ENCODE measurements at regions of chr12 and their contacts with region 1.

Region 1: GRCh38 chr12:122336015-122336946 is 70.0 kb upstream of the VPS33A start:
- DNase-seq: peak; percentile 10
- ATAC-seq: peak; percentile 72
- H3K4me3 ChIP-seq: no peak overlapping the region
- H3K27ac ChIP-seq: no peak overlapping the region
- H3K4me1 ChIP-seq: no peaks in the 10 kb centered on the region
- H3K27me3 ChIP-seq: no peaks in the 10 kb centered on the region
- CTCF ChIP-seq: peak; percentile 62 to 84 (median 84)
- POLR2A ChIP-seq: no peak
- RAD21 ChIP-seq: peak; percentile 78

Region 2: DNA sequence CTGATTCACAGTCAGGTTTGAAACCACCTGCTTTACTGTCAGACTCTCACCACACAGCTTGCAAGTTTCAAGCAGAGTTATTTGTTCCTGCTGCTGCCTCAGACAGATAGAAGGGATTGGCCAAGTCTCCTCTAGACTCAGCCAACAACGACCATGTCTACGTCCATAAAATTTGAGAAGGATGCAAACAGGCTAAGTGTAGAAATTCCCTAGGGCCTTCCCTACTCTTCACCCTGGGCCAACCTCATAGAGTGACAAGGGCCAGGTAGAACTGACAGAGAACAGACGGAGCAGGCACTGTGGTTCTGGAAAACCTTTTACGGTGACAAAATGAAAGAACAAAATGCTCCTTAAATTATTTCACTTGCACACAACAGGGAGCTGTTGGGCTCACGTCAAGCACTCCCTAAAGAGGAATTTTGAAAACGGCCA is 46.7 kb after region 1 on chr12:
- CTCF ChIA-PET with region 1: no interaction called
- POLR2A ChIA-PET with region 1: no interaction called
- RAD21 ChIA-PET with region 1: no interaction called
- intact Hi-C with region 1: no loop called
- DNase-seq: no peak
- ATAC-seq: no peak
- H3K4me3 ChIP-seq: no peak overlapping the region
- H3K27ac ChIP-seq: no peak overlapping the region
- H3K4me1 ChIP-seq: no peaks in the 10 kb centered on the region
- H3K27me3 ChIP-seq: no peaks in the 10 kb centered on the region
- CTCF ChIP-seq: no peak
- POLR2A ChIP-seq: no peak
- RAD21 ChIP-seq: no peak

Region 3: DNA sequence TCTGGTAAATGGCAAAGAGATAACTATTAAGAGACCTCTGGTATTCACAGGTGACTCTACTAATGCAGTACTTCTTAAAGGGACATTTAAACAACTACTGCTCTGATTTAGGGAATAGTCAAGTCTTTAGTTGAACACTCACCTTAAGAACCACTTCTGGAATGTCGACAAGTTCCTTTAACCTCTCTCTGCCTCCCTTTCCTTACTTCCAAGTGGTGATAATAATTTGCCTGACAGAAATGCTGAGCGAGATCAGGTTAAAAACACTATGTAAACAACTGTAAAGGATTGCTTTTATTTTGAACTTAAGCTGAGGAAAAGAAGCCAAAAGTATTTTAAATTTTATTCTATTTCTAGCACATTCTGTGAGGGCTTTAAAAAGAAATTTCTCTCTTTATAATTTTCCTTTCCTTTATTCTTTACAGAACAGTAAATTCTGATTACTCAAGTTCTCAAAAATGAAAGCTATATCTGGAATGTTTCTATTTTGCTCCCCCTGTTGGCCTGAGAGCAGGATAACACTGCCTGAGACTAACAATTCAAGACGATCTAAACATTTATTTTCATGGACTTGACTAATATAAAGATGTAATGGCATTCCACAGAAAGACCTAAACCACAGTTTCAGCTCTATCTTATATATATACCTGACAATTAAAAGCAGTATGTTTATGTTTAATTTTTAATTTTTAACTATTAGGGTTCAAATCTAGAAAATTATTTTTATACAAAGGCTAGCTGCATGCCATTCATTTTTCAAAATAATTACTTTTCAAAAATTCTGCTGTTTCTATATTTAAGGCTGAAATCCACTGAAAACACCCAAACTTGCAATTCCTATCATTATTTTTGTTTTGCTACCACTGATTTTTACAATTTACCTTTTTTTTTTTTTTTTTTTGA is 135.3 kb after region 1 on chr12:
- CTCF ChIA-PET with region 1: interaction called, 5 read pairs
- POLR2A ChIA-PET with region 1: no interaction called
- RAD21 ChIA-PET with region 1: interaction called in 1 of 2 experiments, 3 read pairs
- intact Hi-C with region 1: loop called (anchors 5 kb)
- DNase-seq: peak; percentile 42
- ATAC-seq: peak; percentile 67; the same call in 1 of the 2 replicates
- H3K4me3 ChIP-seq: no peak overlapping the region
- H3K27ac ChIP-seq: no peak overlapping the region
- H3K4me1 ChIP-seq: peaks cover 0 to 10% of the 10 kb centered on the region in 2 experiments; a peak in 2 of 4 replicates
- H3K27me3 ChIP-seq: no peaks in the 10 kb centered on the region
- CTCF ChIP-seq: peak; percentile 67 to 78 (median 77)
- POLR2A ChIP-seq: no peak
- RAD21 ChIP-seq: peak; percentile 81

Region 4: DNA sequence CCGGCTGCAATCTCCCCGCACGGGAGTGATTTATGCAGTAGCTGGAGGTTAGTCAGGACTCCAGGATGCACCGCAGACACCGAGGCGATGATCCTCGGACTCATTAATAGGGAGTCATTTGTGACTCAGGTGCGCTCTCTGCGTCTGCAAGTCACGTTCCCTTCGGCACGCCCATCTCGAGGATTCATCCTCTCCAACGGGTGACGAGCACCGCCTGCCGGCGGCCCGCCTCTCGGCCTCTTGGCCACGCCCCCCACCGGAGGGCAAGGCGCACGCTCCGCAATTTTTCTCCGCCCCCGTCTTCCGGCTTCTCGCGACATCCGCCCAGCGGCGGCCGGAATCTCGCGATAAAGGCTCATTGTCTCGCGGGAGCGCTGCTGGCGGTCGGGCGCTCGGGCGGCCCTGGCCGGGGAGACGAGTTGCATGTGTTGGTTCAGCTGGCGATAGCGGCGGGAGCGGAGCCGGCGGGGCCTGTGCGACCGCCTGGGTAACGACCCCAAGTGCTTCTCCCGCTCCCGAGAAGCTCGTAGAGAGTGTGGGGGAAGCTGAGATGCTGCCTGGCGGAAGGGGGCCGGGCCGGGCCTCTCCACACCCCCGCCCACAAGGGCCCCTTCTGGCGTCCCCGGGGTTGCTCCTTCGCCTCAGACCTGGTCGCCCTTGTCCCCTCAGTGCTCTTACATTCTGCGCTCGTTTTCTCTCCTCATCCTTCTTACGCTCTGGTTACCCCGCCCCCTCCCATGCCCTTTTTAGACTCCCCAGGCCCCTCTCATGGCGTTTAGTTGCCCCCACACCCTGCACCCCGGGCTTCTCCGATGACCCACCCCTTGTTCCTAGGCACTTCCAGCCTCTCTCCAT is 416.4 kb after region 1 on chr12 and contains the start of gene DENR:
- CTCF ChIA-PET with region 1: no interaction called
- POLR2A ChIA-PET with region 1: no interaction called
- RAD21 ChIA-PET with region 1: no interaction called
- intact Hi-C with region 1: loop called (anchors 2 kb)
- DNase-seq: peak; percentile 96
- ATAC-seq: peak; percentile 89
- H3K4me3 ChIP-seq: peak within 1 kb of the TSS; percentile 90 to 99
- H3K27ac ChIP-seq: peak within 1 kb of the TSS; percentile 77
- H3K4me1 ChIP-seq: peaks cover 5 to 14% of the 10 kb centered on the region in 2 experiments; a peak in 3 of 4 replicates
- H3K27me3 ChIP-seq: no peaks in the 10 kb centered on the region
- CTCF ChIP-seq: peak; percentile 48 to 91 (median 70)
- POLR2A ChIP-seq: peak; percentile 85
- RAD21 ChIP-seq: peak; percentile 99
- total RNA-seq, gene DENR: 59.1 TPM

Region 5: DNA sequence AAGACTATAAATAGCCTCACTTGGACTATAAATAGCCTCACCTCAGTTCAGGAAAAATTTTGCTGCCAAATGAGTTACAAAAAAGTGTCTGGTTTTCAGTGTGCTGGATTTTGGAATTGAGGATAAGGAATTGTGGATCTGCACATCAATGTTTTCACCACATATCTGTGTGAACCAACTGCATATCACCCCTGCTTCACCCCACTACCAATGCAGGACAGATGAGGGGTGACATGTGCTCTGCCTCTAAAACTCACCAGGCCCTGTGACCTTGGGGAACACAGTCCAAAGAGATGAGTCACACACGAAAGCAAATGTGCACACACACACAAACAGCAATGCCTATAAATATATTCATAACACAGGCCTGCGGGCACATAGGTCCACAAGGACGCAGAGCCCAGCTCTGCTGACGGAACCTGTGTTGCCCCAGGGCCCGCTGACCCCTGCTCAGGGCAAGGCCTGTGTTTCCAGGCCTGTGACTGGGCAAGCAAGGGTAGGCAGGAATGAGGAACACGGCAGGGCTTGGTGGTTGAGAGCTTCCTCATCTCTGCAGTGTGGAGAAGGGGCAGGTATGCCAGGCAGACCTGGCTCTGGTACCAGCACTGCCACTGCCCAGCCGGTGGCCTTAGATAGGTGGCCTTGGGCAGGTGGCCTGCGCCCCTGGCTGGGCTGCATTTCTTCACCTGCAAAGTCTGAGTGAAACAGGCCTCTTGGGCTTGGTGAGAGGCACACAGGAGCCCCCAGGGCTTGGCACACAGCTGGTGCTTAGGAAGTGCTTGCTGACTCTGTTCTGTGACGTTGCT is 726.6 kb after region 1 on chr12:
- CTCF ChIA-PET with region 1: no interaction called
- POLR2A ChIA-PET with region 1: no interaction called
- RAD21 ChIA-PET with region 1: no interaction called
- intact Hi-C with region 1: no loop called
- DNase-seq: peak; percentile 18
- ATAC-seq: peak; percentile 73
- H3K4me3 ChIP-seq: peak overlapping the region in 1 of 2 experiments; percentile 32; a peak in 2 of 4 replicates
- H3K27ac ChIP-seq: peak overlapping the region; percentile 66
- H3K4me1 ChIP-seq: peaks cover 21 to 29% of the 10 kb centered on the region in 2 experiments
- H3K27me3 ChIP-seq: no peaks in the 10 kb centered on the region
- CTCF ChIP-seq: no peak
- POLR2A ChIP-seq: no peak
- RAD21 ChIP-seq: no peak

Measured in HCT116 (cell line).